ENCODE measurements at regions of chr2 and their contacts with region 1.

Region 1: DNA sequence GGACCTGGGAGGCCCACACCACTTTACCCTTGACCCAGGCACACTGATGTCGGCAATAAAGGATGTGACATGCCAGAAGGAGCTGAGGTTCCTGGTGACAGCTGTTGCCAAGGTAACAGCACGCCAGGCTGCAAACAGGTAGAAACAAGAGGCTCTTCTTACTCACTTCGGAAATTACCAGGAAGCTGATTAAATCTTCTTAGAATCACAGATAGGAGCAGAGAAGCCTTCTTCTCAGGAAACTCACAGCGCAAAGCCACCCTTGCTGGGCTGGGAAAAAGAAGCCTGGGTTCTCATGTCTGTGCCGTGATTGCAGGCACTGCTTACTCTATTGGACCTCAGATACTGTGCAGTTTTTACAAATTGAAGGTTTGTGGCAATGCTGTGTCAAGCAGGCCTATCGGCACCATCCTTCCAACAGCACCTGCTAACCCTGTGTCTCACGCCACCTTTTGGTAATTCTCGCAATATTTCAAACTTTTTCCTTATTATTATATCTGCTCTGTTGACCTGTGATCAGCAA is 61.0 kb upstream of the TAF1B start:
- DNase-seq: peak; percentile 89
- ATAC-seq: peak; percentile 80
- H3K4me3 Mint-ChIP-seq: peak overlapping the region; percentile 53
- H3K27ac Mint-ChIP-seq: peak overlapping the region; percentile 93
- H3K4me1 Mint-ChIP-seq: peaks cover 57% of the 10 kb centered on the region
- H3K27me3 Mint-ChIP-seq: no peaks in the 10 kb centered on the region

Region 2: DNA sequence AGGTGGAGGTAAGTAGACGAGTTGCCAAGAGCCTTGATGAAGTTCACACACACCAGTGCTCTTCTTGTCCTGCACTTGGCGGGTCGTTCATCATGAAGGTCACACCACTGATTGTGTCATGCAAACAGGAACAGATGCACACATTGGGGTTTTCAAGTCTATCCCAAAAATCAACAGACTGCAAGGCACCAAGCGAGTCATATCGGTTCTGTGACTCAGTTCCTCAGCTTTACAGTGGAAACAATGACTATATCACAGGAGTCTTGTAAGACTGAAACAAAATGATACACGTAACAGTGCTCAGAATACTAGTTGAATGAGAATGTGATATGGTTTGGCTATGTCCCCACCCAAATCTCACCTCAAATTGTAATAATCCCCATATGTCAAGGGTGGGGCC is 1627.3 kb before region 1 on chr2:
- CTCF ChIA-PET with region 1: no interaction called
- POLR2A ChIA-PET with region 1: no interaction called
- intact Hi-C with region 1: no loop called
- DNase-seq: peak; percentile 73
- ATAC-seq: peak; percentile 92
- H3K4me3 Mint-ChIP-seq: peak overlapping the region; percentile 11
- H3K27ac Mint-ChIP-seq: peak overlapping the region; percentile 95
- H3K4me1 Mint-ChIP-seq: peaks cover 30% of the 10 kb centered on the region
- H3K27me3 Mint-ChIP-seq: no peaks in the 10 kb centered on the region

Region 3: DNA sequence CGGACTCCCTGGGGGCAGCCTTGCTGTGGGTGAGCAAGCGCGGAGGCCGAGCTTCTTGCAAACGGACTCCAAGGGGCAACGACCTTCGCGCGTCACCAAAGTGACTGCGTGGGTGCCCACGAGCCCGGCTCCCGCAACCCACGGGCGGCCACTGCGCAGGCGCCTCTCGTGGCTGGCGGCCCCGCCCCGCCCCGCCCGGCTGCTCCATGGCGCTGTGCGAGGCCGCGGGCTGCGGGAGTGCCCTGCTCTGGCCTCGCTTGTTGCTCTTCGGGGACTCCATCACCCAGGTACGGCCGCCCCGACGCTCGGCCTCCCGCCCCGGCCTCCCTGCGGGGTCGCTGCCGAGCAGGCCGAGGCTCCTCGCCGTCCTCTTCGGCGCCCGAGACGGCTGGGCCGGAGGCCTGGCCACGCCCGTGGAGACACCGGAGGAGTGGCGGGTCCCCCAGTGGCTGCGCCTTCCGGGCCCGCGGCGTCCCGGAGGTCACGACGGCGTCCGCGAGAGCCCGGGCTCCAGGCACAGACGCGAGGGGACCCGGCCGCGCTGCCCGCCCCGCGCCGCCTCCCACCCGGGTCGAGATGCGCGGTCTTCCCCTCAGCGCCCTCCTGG is 307.8 kb before region 1 on chr2 and contains the start of gene IAH1:
- CTCF ChIA-PET with region 1: no interaction called
- POLR2A ChIA-PET with region 1: interaction called, 3 read pairs
- intact Hi-C with region 1: loop called in 1 of 2 experiments (anchors 1 kb)
- DNase-seq: peak; percentile 81
- ATAC-seq: peak; percentile 81
- H3K4me3 Mint-ChIP-seq: peak within 1 kb of the TSS; percentile 79
- H3K27ac Mint-ChIP-seq: peak within 1 kb of the TSS; percentile 75
- H3K4me1 Mint-ChIP-seq: peaks cover 42% of the 10 kb centered on the region
- H3K27me3 Mint-ChIP-seq: no peaks in the 10 kb centered on the region
- total RNA-seq, gene IAH1: 53.7 to 63.7 TPM

Region 4: DNA sequence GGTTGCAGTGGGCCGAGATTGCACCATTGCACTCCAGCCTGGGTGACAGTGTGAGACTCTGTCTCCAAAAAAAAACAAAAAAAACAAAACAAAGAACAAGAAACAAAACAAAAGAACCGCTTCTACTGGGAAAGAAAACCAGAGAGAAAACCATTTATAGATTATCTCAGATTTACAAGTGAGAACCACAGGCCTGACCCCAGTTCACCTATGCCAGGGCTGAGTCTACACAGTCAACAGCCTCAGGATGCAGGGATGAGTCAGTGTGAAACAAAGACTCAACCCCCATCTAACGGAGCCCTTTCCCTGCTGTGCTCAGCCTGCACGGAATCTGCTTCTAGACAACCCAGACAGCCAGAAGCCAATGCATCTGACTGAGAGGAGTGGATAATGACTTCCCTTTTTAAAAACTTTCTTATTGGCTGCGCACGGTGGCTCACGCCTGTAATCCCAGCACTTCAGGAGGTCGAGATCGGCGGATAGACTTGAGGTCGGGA is 125.9 kb before region 1 on chr2:
- CTCF ChIA-PET with region 1: no interaction called
- POLR2A ChIA-PET with region 1: no interaction called
- intact Hi-C with region 1: loop called in 1 of 2 experiments (anchors 1 kb)
- DNase-seq: peak; percentile 86
- ATAC-seq: peak; percentile 87
- H3K4me3 Mint-ChIP-seq: peak overlapping the region; percentile 26
- H3K27ac Mint-ChIP-seq: peak overlapping the region; percentile 89
- H3K4me1 Mint-ChIP-seq: peaks cover 37% of the 10 kb centered on the region
- H3K27me3 Mint-ChIP-seq: peaks cover 10% of the 10 kb centered on the region

Region 5: DNA sequence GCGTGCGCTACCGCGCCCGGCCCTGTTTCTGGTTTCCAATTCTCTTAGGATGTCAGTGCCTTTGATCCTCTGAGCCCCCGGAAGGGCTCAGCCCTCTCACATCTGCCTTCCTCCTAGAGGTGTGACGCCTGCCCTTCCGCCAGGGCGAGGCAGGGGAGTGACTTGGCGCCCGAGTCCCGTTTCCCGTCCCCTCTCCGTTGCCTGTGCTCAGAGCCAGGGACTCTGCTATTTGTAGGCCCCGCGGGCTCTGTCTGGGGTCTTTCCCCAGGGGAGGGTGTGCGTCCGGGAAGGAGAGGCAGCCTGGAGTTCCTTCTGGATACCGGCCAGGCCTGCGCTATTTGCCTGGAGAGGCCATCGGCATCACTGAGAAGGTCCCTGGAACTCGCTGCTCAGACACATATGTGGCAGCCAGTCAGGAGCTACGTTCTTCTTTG is 42.7 kb before region 1 on chr2:
- CTCF ChIA-PET with region 1: interaction called, 4 read pairs
- POLR2A ChIA-PET with region 1: no interaction called
- intact Hi-C with region 1: loop called in 1 of 2 experiments (anchors 2 kb)
- DNase-seq: peak; percentile 73
- ATAC-seq: peak; percentile 75
- H3K4me3 Mint-ChIP-seq: peak overlapping the region; percentile 65
- H3K27ac Mint-ChIP-seq: peak overlapping the region; percentile 92
- H3K4me1 Mint-ChIP-seq: peaks cover 53% of the 10 kb centered on the region
- H3K27me3 Mint-ChIP-seq: no peaks in the 10 kb centered on the region

Region 6: GRCh38 chr2:9799665-9800632 is 17.7 kb after region 1 on chr2:
- CTCF ChIA-PET with region 1: interaction called, 34 read pairs
- POLR2A ChIA-PET with region 1: interaction called, 6 read pairs
- intact Hi-C with region 1: loop called in 1 of 2 experiments (anchors 1 kb)
- DNase-seq: peak; percentile 93
- ATAC-seq: peak; percentile 92
- H3K4me3 Mint-ChIP-seq: peak overlapping the region; percentile 39
- H3K27ac Mint-ChIP-seq: peak overlapping the region; percentile 86
- H3K4me1 Mint-ChIP-seq: peaks cover 24% of the 10 kb centered on the region
- H3K27me3 Mint-ChIP-seq: peaks cover 2% of the 10 kb centered on the region

Region 7: DNA sequence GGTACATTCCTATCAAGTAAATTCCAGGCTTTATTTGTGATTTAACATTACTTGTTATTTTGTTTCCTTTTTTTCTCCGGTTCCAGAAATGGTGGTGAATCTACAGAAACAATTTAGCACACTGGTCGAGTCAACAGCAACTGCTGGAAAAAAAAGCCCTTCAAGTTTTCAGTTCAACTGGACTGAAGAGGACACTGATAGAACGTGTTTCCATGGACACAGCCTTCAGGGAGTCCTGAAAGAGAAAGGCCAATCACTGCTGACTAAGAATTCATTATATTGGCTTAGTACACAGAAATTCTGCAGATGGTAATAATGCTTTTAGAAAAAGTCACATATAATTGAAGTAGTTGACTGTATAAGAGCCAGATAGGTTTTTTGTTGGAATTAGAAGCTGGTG is 137.3 kb after region 1 on chr2:
- CTCF ChIA-PET with region 1: no interaction called
- POLR2A ChIA-PET with region 1: no interaction called
- intact Hi-C with region 1: no loop called
- DNase-seq: no peak
- ATAC-seq: no peak
- H3K4me3 Mint-ChIP-seq: no peak overlapping the region
- H3K27ac Mint-ChIP-seq: no peak overlapping the region
- H3K4me1 Mint-ChIP-seq: peaks cover 3% of the 10 kb centered on the region
- H3K27me3 Mint-ChIP-seq: no peaks in the 10 kb centered on the region

Measured in activated CD4-positive, alpha-beta T cell treated with anti-CD3 and anti-CD28 coated beads for 36 hours (primary cell).